HEK293T (cell line): ENCODE measurements at regions of chr9 and their contacts with region 1.

Region 1: GRCh38 chr9:126301985-126302603 is 24.5 kb upstream of the MVB12B start:
- DNase-seq: peak; percentile 76

Region 2: DNA sequence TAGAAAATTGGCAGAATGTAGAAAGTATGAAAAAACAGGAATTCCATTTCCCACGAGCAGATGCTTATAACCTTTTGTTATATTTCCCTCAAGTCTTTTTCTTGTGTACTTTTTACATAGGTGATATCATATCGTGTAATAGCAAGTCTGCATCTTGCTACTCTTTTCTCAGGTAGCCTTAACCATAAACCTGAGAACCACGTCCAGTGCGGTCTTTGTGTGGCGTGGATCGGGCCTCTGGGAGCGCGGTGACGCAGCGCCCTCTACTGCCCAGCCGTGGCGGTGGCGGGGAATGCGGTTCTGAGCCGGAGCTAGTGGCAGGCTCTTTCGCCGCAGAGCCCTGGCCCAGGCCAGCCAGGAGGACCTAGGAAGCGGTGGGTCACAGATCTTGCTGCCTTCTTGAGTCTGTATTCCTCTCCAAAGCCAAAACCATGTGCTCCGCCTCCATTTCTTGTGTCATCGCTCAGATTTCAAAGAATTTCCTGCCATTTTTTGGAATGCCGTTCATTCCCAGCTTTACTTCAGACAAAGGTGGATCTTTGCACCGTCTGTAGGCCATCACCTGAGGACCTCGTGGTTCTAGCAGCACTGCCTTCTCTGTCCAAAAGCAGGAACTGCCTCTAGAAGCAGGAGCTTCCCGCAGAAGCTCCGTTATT is 96.4 kb after region 1 on chr9:
- CTCF ChIA-PET with region 1: interaction called, 16 read pairs
- POLR2A ChIA-PET with region 1: no interaction called
- DNase-seq: peak; percentile 88